ENCODE measurements at regions of chr2 and their contacts with region 1.

Region 1: DNA sequence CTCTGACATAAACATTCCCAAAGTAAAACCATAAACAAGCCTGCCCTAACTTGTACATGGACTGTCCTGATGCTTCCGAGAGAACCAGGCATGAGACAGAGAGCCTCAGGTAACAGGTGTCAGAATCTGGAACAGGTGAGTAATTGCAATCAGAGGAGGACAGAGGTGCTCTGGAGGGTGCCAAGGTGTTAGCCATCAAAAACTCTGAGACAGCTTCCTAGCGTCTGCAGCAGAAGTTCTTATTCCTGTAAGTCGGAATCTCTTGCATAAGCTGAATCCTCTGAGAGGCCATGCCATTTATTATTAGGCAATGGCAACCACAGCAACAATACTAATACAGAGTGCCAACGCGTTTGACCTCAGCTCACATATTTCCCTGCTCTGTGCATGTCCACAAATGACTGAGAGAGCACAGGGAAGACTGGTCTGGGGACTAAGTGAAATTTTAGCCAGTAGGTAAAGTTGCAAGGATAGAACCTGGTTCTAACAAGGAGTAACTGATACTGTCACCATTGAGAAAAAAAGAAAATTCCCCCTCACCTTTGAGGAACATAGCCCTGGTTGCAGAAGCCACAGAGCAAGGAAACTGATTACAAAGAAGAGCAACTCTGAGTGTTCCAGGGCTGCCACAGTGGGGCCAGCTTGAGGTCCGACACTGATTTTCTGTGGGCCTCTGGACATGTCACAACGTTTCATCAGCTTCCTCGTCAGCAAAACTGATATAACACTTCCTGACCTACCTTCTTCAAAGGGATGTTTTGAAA is 55.1 kb upstream of the ACSL3 start:
- DNase-seq: peak; percentile 68
- H3K4me3 ChIP-seq: no peak overlapping the region
- H3K27ac ChIP-seq: peak overlapping the region; percentile 72
- H3K4me1 ChIP-seq: peaks cover 31% of the 10 kb centered on the region
- H3K27me3 ChIP-seq: no peaks in the 10 kb centered on the region
- CTCF ChIP-seq: no peak

Region 2: DNA sequence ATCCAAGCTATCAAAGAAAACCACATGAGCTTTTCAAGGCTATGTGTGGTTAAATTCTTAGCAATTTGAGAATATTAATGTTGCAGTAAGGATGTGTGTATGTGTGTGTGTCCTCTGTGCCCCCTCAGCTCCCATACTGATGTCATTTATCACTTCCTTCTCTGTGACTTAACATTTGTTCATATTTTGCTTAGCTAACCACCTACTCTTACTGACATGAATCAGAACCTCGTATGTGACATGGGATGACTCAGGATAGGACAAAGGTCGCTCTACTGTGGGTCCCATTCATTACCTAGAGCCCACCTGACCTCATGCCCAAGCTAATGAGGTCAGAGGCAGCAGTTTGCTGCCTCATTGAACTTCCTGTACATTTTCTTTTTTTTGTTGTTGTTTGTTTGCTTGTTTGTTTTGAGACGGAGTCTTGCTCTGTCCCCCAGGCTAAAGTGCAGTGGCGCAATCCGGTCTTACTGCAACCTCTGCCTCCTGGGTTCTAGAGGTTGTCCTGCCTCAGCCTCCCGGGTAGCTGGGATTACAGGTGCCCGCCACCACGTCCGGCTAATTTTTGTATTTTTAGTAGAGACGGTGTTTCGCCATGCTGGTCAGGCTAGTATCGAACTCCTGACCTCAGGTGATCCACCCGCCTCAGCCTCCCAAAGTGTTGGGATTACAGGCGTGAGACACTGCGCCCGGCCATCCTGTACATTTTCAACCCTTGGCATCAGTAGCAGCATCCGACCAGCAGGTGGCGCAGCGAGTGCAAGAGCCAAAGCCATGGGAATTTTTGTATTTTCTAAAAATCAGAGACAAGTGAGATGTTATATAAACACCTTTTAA is 97.8 kb before region 1 on chr2:
- CTCF ChIA-PET with region 1: no interaction called
- dilution Hi-C with region 1: no loop called
- in situ Hi-C with region 1: no loop called
- intact Hi-C with region 1: loop called (anchors 1 kb)
- DNase-seq: peak; percentile 68
- H3K4me3 ChIP-seq: no peak overlapping the region
- H3K27ac ChIP-seq: no peak overlapping the region
- H3K4me1 ChIP-seq: peaks cover 8% of the 10 kb centered on the region
- H3K27me3 ChIP-seq: no peaks in the 10 kb centered on the region
- CTCF ChIP-seq: peak; percentile 83 to 91

Region 3: GRCh38 chr2:222756951-222757650 is 48.6 kb before region 1 on chr2:
- CTCF ChIA-PET with region 1: no interaction called
- dilution Hi-C with region 1: no loop called
- in situ Hi-C with region 1: no loop called
- intact Hi-C with region 1: loop called (anchors 5 kb)
- DNase-seq: peak; percentile 87
- H3K4me3 ChIP-seq: no peak overlapping the region
- H3K27ac ChIP-seq: peak overlapping the region; percentile 94
- H3K4me1 ChIP-seq: peaks cover 44% of the 10 kb centered on the region
- H3K27me3 ChIP-seq: no peaks in the 10 kb centered on the region
- CTCF ChIP-seq: no peak

Region 4: GRCh38 chr2:222837511-222838056 is 31.9 kb after region 1 on chr2:
- CTCF ChIA-PET with region 1: no interaction called
- dilution Hi-C with region 1: no loop called
- in situ Hi-C with region 1: no loop called
- intact Hi-C with region 1: loop called (anchors 1 kb)
- DNase-seq: peak; percentile 98
- H3K4me3 ChIP-seq: peak overlapping the region in 2 of 3 experiments; percentile 13 to 18
- H3K27ac ChIP-seq: peak overlapping the region; percentile 93
- H3K4me1 ChIP-seq: peaks cover 42% of the 10 kb centered on the region
- H3K27me3 ChIP-seq: no peaks in the 10 kb centered on the region
- CTCF ChIP-seq: no peak